ENCODE measurements at regions of chr10 and their contacts with region 1.

Region 1: DNA sequence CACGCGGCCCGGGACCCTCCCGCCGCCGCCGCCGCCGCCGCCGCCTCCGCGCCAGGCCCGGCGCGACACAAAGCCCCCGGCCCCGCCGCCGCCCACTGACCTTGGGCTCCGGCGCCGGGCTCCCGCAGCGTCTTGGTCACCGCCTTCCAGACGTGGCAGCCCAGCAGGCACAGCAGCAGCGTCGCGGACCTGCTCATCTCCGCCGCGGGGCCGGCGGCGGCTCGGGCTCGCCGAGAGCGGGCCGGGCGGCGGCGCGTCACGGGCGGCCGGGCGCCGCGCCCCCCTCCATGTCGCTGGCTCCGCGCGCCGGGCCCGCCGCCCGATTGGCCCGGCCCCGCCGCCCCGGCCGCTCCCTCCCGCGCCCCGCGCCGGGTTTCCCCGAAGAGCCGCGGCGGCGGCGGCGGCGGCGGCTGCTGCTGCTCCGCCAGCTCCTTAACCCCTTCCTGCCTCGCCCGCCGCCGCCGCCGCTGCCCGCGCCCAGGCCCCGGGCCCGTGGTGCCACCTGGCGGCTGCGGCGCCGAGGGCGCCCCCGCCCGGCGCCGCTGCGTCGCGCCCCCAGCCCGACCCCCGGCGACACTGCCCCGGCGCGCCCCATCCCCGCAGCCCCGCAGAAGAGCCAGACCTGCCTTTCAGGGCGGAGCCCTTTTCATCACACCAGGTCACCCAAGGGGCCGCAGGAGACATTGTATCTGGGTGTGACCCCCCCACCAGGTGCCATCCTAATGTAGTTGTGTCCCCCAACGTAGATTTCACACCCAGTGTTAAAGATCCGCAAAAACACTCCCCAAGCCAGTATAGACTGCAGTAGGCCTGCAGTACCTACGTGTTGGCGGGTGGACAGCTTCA is at the start of gene FAM171A1:
- DNase-seq: peak; percentile 29
- ATAC-seq: peak; percentile 84
- H3K4me3 ChIP-seq: peak within 1 kb of the TSS; percentile 91
- H3K27ac ChIP-seq: peak within 1 kb of the TSS; percentile 5; the same call in 1 of the 2 replicates
- H3K4me1 ChIP-seq: 0 out of 2 replicates have a peak, but pooled peaks cover 2% of the 10 kb centered on the region
- H3K27me3 ChIP-seq: peaks cover 5% of the 10 kb centered on the region
- CTCF ChIP-seq: peak; percentile 47
- POLR2A ChIP-seq: no peak
- RAD21 ChIP-seq: no peak
- total RNA-seq, gene FAM171A1: 20.3 and 26.1 TPM in 2 replicates

Region 2: DNA sequence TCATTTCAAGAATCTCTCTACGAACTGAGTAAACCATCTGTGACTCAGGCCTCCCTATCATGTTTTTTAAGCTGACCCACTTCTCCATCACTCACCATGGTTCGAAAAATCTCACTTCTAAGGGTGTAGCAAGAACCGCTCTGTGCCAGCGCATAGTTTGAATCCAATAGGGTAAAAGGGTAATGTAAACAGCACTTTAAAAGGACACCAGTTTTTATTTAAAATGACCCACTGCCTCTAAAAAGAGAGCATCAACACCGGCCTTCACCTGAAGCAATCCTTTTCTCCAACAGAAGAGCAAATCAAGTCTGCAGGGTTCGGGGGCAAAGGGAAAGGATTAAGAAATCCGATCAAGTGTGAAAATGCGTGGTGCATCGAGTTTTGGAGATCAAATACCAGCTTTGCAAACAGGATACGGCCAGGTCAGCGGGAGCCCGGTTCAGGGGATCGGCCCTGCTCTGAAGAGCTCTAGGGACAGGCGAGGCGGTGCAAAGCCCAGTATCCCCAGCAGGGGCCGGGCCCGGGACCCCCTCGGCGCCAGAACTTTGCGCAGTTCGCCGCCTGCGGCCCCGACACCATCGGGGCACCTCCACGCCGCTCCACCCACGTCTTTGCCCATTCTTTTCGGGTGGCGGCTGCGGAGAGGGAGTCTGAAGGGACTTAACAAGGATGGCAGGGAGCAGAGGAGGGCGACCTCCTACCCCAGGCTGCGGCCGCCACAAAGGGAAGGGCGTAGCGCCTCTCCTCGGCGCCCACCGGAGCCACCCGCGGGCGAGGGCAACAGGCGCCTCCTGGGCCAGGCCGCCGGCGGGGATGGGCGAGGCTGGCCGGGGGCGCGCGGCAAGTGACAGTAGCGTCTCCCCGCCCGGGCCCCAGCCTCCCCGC is 203.4 kb before region 1 on chr10:
- CTCF ChIA-PET with region 1: no interaction called
- POLR2A ChIA-PET with region 1: no interaction called
- dilution Hi-C with region 1: no loop called
- in situ Hi-C with region 1: no loop called
- intact Hi-C with region 1: loop called (anchors 2 kb)
- DNase-seq: peak; percentile 49
- ATAC-seq: peak; percentile 38
- H3K4me3 ChIP-seq: peak overlapping the region; percentile 100
- H3K27ac ChIP-seq: peak overlapping the region; percentile 57
- H3K4me1 ChIP-seq: peaks cover 11% of the 10 kb centered on the region
- H3K27me3 ChIP-seq: no peaks in the 10 kb centered on the region
- CTCF ChIP-seq: peak; percentile 46
- POLR2A ChIP-seq: no peak
- RAD21 ChIP-seq: peak; percentile 28

Region 3: DNA sequence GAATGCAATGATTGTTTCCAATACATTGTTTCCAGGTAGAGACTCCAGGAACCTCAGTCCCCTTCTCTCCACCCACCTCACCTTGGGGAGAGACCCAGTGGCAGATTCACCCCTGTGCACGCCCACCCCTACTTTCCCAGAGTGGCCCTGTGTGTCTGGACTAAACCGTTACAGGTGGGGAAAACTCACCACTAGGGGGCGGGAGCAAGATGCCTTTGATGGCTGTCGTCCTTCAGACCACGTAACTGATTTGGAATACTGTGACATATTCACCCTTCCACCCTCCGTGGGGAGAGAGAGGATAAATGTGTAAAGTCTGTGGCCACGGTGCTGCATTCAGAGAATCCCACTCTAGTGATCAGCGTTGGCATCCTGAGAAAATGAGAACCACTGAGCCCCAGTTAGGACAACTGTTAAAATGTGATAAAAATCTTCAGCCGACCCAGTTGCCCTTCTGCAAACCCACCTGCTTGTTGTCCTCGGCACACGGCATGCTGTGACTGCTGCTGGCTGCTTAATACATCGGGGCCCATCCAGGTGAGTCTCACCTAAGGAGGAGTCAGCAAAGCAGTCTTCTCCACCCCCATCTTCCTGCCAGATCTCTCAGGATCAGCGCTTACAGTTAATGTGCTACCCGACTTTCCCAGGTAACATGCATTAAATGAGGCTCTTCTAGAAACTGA is 161.1 kb before region 1 on chr10:
- CTCF ChIA-PET with region 1: interaction called, 7 read pairs
- POLR2A ChIA-PET with region 1: no interaction called
- dilution Hi-C with region 1: no loop called
- in situ Hi-C with region 1: no loop called
- intact Hi-C with region 1: loop called (anchors 2 kb)
- DNase-seq: peak; percentile 74
- ATAC-seq: peak; percentile 61
- H3K4me3 ChIP-seq: no peak overlapping the region
- H3K27ac ChIP-seq: no peak overlapping the region
- H3K4me1 ChIP-seq: peaks cover 4% of the 10 kb centered on the region
- H3K27me3 ChIP-seq: no peaks in the 10 kb centered on the region
- CTCF ChIP-seq: peak; percentile 73
- POLR2A ChIP-seq: no peak
- RAD21 ChIP-seq: peak; percentile 68